ENCODE measurements at regions of chr13 and their contacts with region 1.

Region 1: DNA sequence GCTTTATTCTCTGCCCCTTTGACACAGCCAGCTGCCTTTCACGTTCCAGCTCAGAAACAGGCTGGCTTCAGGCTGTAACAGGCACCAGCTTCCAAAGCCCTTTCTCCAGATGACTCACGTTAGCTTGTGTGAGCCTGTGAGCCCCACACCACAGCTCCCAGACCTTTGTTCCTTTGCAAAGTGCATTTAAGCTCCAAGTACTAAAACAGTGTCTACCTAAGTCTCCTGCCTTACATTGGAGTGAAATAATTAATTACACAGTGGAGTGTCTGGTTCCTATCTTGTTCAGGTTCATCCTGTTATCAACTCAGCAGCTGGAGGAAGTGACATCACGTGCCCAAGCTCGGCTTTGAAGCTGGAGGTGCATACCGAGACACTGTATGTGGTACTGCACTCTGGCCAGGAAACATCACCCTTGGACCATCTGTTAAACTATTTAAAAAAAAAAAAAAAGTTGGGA is 475.8 kb downstream of the FOXO1 start:
- DNase-seq: peak; percentile 18 to 88 (median 68)
- ATAC-seq: peak; percentile 29 to 47
- H3K4me3 Mint-ChIP-seq: peak overlapping the region; percentile 55 to 84 (median 80)
- H3K27ac Mint-ChIP-seq: peak overlapping the region; percentile 92 to 99 (median 98)
- H3K4me1 Mint-ChIP-seq: peaks cover 53 to 90% (median 82%) of the 10 kb centered on the region in 4 donors
- H3K27me3 Mint-ChIP-seq: peaks cover 0 to 1% (median 0%) of the 10 kb centered on the region in 5 donors

Region 2: GRCh38 chr13:40125336-40125735 is 65.3 kb before region 1 on chr13:
- POLR2A ChIA-PET with region 1: interaction called, 10 read pairs
- DNase-seq: no peak
- ATAC-seq: no peak
- H3K4me3 Mint-ChIP-seq: no peak overlapping the region
- H3K27ac Mint-ChIP-seq: peak overlapping the region in 1 of 10 donors; percentile 28
- H3K4me1 Mint-ChIP-seq: peaks cover 20 to 39% (median 32%) of the 10 kb centered on the region in 4 donors
- H3K27me3 Mint-ChIP-seq: no peaks in the 10 kb centered on the region

Region 3: GRCh38 chr13:40160618-40161350 is 29.9 kb before region 1 on chr13:
- POLR2A ChIA-PET with region 1: no interaction called
- DNase-seq: no peak
- ATAC-seq: no peak
- H3K4me3 Mint-ChIP-seq: no peak overlapping the region
- H3K27ac Mint-ChIP-seq: no peak overlapping the region
- H3K4me1 Mint-ChIP-seq: peaks cover 8 to 55% (median 22%) of the 10 kb centered on the region in 4 donors
- H3K27me3 Mint-ChIP-seq: no peaks in the 10 kb centered on the region

Region 4: DNA sequence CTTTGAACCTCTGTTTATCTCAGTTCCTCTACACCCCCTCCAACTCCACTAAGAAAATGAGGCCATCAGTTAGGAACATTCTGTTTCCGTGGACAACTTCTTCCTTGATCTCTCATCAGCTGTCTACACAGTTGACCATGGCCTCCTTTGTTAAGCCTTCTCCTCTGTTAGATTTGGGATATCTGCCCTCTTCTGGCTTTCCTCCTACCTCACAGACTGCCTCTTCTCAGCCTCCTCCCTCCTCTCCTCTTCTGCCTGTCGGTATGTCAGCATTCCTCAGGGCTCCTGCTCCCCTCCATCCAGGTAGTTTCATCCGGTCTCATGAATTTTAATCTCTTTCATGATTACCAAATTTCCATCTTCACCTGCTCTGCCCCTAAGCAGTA is 20.9 kb after region 1 on chr13:
- POLR2A ChIA-PET with region 1: interaction called, 10 read pairs
- DNase-seq: no peak
- ATAC-seq: no peak
- H3K4me3 Mint-ChIP-seq: no peak overlapping the region
- H3K27ac Mint-ChIP-seq: peak overlapping the region in 7 of 10 donors; percentile 5 to 74 (median 20)
- H3K4me1 Mint-ChIP-seq: peaks cover 43 to 72% (median 65%) of the 10 kb centered on the region in 4 donors
- H3K27me3 Mint-ChIP-seq: no peaks in the 10 kb centered on the region

Region 5: DNA sequence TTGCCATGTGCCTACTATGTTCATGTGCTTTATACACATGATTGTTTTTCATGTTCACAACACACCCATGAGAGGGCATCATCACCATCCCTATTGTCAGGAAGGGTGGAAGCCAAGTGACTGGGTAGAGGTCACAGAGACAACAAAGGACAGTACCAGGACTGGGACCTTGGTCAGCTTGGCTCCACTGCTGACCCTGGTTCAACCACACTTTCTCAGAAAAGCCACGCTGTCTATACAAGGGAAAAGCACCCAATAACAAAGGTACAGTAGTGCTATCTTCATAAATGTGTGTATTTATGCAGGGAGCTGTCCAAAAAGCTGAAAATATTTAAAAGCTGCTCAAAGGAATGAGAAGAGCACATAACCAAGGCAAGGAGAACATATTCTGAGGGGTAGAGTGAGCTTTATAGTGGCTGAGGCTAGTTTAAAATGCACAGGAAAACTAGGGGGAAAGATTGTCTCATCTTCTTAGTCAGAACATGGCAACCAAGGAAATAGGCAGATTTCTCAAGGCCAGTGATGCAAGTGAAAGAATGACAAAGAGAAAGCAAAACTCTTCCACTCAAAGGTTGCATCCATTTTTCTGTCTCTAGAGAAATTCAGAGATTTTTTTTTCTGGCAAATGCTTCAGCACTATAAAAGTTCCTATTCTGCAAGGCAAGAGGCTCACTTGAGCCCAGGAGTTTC is 60.8 kb after region 1 on chr13:
- POLR2A ChIA-PET with region 1: no interaction called
- DNase-seq: peak in 2 of 10 donors; percentile 6
- ATAC-seq: no peak
- H3K4me3 Mint-ChIP-seq: peak overlapping the region in 1 of 10 donors; percentile 20
- H3K27ac Mint-ChIP-seq: peak overlapping the region in 5 of 10 donors; percentile 1 to 76 (median 55)
- H3K4me1 Mint-ChIP-seq: peaks cover 13 to 33% (median 28%) of the 10 kb centered on the region in 4 donors
- H3K27me3 Mint-ChIP-seq: no peaks in the 10 kb centered on the region

Region 6: DNA sequence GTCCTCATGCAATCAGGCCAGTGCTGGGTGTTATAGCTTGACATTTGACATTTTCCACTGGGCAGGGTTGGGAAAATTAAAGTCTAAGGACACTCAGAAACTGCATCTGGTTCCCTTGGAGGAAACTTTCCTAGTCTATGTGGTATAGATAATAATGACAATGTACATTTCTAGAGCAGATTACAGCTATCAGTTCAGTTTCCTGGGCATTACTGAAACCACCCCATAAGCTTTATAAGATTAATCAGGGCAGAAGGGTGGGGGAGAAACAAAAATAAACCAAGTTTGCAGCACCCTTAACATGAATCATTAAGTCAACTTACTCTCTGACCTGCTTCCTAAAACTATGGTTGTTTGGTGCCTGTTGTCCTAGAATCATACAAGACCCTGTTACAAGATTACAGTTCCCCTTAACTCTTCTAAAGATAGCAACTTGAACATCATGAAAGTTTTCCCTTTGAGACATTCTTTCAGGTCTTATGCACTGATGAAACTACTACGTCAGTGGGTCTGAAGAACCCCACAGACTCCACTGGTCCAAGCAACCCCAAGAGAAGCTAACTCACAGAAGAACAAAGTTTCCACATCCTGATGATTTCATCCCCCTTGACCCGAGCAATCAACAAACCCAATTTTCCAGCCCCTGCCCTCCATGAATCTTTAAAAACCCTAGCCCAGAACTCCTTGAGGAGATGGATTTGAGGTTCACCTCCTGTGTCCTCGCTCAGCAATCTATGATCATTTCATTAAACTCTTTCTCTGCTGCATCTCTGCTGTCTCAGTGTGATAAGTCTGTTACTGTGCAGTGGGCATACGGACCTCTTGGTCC is 139.2 kb after region 1 on chr13:
- POLR2A ChIA-PET with region 1: no interaction called
- DNase-seq: no peak
- ATAC-seq: no peak
- H3K4me3 Mint-ChIP-seq: no peak overlapping the region
- H3K27ac Mint-ChIP-seq: peak overlapping the region in 3 of 10 donors; percentile 42 to 63 (median 52)
- H3K4me1 Mint-ChIP-seq: peaks cover 20 to 30% (median 25%) of the 10 kb centered on the region in 4 donors
- H3K27me3 Mint-ChIP-seq: no peaks in the 10 kb centered on the region

Region 7: DNA sequence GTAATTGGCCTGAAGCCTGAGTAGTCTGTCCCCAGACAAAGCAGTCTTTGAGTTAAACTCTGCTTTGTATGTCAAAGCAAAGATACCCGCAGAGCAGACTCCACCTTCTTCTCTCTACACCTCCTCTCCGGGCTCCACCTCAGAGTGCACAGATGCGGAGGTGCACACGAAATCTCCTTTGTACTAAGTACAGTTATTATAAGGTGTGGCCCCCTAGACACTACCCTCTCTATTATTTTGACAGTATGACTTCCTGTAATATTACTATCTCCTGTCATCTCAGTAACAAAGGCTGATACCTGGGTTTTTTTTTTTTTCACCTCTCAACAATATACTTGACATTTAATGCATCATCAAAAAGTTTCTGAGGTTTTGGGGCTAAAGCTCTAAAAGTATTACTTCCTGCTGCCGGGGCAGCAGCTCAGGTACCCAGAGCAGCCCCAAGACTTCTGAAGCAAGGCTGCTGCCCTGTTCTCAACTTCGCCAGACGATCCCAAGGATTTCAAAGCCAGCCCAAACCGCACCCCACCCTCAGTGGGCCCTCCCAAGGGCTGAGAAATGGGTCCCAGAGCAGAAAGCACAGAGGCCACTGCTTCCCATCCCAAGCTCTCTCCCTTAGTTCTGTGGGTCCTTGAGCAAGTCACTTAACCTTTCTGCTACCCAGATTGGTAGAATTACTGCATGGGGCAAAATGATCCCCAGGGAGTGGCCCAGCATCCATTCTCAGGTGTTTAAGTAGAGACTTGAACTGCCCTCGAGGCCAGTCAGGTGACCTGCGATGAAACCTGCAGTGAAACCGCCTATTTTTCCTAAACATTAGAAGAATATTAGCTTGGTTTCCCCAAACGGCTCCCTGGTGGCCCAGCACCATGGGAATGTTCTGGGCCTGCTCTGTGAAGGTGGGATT is 295.2 kb after region 1 on chr13:
- POLR2A ChIA-PET with region 1: interaction called, 12 read pairs
- DNase-seq: peak; percentile 38 to 91 (median 78)
- ATAC-seq: peak; percentile 90 to 91
- H3K4me3 Mint-ChIP-seq: peak overlapping the region; percentile 50 to 86 (median 74)
- H3K27ac Mint-ChIP-seq: peak overlapping the region; percentile 89 to 99 (median 96)
- H3K4me1 Mint-ChIP-seq: peaks cover 56 to 95% (median 92%) of the 10 kb centered on the region in 4 donors
- H3K27me3 Mint-ChIP-seq: no peaks in the 10 kb centered on the region

Region 8: GRCh38 chr13:40666045-40666904 is 475.6 kb after region 1 on chr13 and contains the start of gene FOXO1:
- POLR2A ChIA-PET with region 1: interaction called, 40 read pairs
- DNase-seq: peak; percentile 85 to 96 (median 92)
- ATAC-seq: peak; percentile 72 to 78
- H3K4me3 Mint-ChIP-seq: peak within 1 kb of the TSS; percentile 89 to 98 (median 92)
- H3K27ac Mint-ChIP-seq: peak within 1 kb of the TSS; percentile 86 to 97 (median 94)
- H3K4me1 Mint-ChIP-seq: peaks cover 21 to 44% (median 39%) of the 10 kb centered on the region in 4 donors
- H3K27me3 Mint-ChIP-seq: no peaks in the 10 kb centered on the region
- polyA plus RNA-seq, gene FOXO1: 59.1 to 137 (median 86.5) TPM